Activated CD8-positive, alpha-beta T cell treated with anti-CD3 and anti-CD28 coated beads, Interleukin-2, amount 10 ng/mL, durations not matched to agents 7 days and 5 days (primary cell): ENCODE measurements at regions of chr9 and their contacts with region 1.

Region 1: GRCh38 chr9:114691046-114691955 is 9.3 kb upstream of the TEX48 start:
- DNase-seq: peak; percentile 91
- ATAC-seq: peak; percentile 93
- H3K4me3 Mint-ChIP-seq: peak overlapping the region; percentile 54
- H3K27ac Mint-ChIP-seq: peak overlapping the region; percentile 93
- H3K4me1 Mint-ChIP-seq: peaks cover 95% of the 10 kb centered on the region
- H3K27me3 Mint-ChIP-seq: no peaks in the 10 kb centered on the region

Region 2: GRCh38 chr9:114706711-114707110 is 15.4 kb after region 1 on chr9:
- CTCF ChIA-PET with region 1: interaction called, 15 read pairs
- POLR2A ChIA-PET with region 1: interaction called, 16 read pairs
- DNase-seq: no peak
- ATAC-seq: no peak
- H3K4me3 Mint-ChIP-seq: no peak overlapping the region
- H3K27ac Mint-ChIP-seq: no peak overlapping the region
- H3K4me1 Mint-ChIP-seq: peaks cover 72% of the 10 kb centered on the region
- H3K27me3 Mint-ChIP-seq: no peaks in the 10 kb centered on the region

Region 3: DNA sequence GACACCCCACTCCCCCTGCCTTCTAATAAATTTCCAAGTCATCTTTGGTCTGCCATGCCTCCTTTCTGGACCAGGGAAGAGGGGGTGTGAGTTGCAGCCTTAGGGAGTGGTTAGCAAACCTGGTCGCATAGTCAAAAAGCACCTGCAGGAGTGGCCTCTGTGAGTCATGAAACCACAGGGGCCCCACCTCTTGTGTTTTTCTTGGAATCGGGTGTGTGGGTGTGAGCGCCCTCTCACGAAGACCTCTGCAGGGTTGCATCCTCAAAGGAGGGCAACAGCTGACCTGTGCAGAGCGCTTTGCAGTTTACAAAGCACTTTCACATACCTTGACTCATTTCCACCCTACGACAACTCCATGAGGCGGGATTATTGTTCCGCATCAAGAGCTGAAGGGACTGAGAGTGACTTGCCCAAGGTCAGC is 27.5 kb after region 1 on chr9:
- CTCF ChIA-PET with region 1: interaction called, 38 read pairs
- POLR2A ChIA-PET with region 1: interaction called, 55 read pairs
- DNase-seq: peak; percentile 98
- ATAC-seq: peak; percentile 95
- H3K4me3 Mint-ChIP-seq: peak overlapping the region; percentile 19
- H3K27ac Mint-ChIP-seq: peak overlapping the region; percentile 94
- H3K4me1 Mint-ChIP-seq: peaks cover 88% of the 10 kb centered on the region
- H3K27me3 Mint-ChIP-seq: no peaks in the 10 kb centered on the region

Region 4: DNA sequence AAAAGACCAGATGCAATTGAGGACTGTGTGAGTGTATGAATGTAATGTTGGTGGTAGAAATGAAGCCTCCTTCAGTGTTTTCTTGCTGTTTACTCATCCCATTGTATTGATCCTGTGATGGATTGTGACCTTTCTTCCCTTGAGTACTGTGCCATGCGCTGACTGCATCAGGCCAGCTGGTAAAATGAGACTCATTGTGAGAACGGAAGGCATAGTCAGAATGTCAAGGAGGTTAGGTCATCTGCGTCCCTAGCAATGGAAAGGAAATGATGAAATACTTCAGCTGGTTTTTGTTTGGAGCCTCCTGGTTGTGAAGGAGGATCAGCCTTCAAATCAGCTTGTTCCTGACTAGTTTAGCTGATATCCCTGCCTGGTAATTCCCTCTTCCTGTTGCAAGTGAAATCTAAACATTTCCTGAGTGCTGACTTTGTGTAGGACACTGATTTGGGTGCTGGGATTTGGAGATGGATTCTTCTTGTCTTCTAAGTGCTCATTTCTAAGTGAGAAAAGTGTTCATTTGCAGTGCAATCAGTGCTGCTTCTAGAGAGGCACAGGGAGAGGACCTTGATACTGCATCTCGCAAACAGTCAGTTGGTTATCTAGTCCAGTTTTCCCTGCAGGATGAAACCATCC is 203.6 kb after region 1 on chr9:
- CTCF ChIA-PET with region 1: interaction called, 6 read pairs
- POLR2A ChIA-PET with region 1: interaction called, 13 read pairs
- DNase-seq: peak; percentile 59
- ATAC-seq: peak; percentile 22
- H3K4me3 Mint-ChIP-seq: no peak overlapping the region
- H3K27ac Mint-ChIP-seq: peak overlapping the region; percentile 79
- H3K4me1 Mint-ChIP-seq: peaks cover 52% of the 10 kb centered on the region
- H3K27me3 Mint-ChIP-seq: no peaks in the 10 kb centered on the region

Region 5: DNA sequence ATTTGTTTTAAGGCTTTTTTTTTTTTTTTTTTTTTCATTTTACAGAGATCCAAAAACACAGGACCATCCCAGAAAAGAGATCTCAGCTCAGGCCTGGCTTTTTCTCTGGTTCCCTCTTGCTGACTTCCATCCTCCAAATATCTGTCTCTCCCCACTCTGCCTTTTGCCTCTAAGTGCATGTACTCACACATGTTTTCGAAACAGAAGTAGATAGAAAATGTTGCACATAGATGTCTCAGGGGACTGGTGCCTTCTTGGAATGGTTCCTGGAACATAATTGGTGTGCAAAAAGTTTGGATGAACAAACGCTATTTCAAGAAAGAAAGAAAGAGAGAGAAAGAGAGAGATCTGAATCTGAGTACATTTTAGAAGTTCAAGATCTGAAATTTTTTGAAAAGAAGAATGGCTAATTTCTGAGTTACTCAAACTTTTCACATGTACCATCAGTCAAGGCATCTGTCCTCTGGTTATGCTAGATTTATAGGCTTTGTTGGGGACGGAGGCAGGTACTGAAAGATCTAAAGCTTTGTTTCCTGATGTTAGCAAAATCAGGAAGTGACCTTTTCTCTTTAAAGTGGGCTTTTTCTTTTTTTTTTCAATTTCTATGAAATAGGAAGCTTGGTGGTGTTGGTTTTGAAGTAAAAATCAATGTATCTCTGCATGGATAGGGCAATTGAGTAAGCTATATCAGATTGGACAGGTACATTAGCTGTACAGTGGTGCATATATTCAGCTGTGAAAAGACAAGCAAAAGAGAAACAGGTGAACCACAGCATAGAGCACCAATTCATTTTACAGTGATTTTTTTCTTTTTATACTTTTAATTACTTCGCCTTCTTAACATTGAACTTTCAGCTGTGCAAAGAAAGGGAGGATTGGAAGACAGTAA is 247.6 kb after region 1 on chr9:
- CTCF ChIA-PET with region 1: no interaction called
- POLR2A ChIA-PET with region 1: no interaction called
- DNase-seq: no peak
- ATAC-seq: peak; percentile 76
- H3K4me3 Mint-ChIP-seq: peak overlapping the region; percentile 69
- H3K27ac Mint-ChIP-seq: peak overlapping the region; percentile 83
- H3K4me1 Mint-ChIP-seq: peaks cover 33% of the 10 kb centered on the region
- H3K27me3 Mint-ChIP-seq: no peaks in the 10 kb centered on the region

Region 6: DNA sequence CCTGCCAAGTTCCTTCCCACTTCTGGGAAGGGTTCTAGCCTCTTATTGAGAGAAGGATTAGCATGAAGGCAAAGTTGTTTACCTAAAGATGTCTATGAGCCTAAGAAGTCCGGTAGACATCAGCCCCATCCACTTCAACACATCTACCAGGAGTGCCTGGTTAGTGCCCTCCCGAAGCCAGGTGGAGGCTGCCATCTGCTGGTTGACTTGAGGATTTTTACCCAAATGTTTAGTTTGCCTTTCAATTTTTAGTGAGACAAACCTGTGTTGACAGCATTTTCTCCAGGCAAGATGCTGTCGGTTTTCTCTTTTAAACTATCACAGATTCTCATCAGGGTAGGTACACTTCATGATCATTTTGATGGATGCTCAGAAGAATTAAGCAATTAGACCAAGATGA is 322.7 kb after region 1 on chr9:
- CTCF ChIA-PET with region 1: interaction called, 11 read pairs
- POLR2A ChIA-PET with region 1: no interaction called
- DNase-seq: peak; percentile 89
- ATAC-seq: peak; percentile 93
- H3K4me3 Mint-ChIP-seq: no peak overlapping the region
- H3K27ac Mint-ChIP-seq: peak overlapping the region; percentile 70
- H3K4me1 Mint-ChIP-seq: peaks cover 48% of the 10 kb centered on the region
- H3K27me3 Mint-ChIP-seq: no peaks in the 10 kb centered on the region